Activated T-helper 1 cell treated with anti-CD3 and anti-CD28 coated beads, Interleukin-12 subunit alpha, Interleukin-12 subunit beta, Interleukin-2, Interleukin-4 antibody, amounts not matched to agents 30 ng/mL and 10 ng/mL and 1 ng/mL, durations not matched to agents 14 hours and 24 hours and 36 hours (primary cell): ENCODE measurements at regions of chr4 and their contacts with region 1.

Region 1: DNA sequence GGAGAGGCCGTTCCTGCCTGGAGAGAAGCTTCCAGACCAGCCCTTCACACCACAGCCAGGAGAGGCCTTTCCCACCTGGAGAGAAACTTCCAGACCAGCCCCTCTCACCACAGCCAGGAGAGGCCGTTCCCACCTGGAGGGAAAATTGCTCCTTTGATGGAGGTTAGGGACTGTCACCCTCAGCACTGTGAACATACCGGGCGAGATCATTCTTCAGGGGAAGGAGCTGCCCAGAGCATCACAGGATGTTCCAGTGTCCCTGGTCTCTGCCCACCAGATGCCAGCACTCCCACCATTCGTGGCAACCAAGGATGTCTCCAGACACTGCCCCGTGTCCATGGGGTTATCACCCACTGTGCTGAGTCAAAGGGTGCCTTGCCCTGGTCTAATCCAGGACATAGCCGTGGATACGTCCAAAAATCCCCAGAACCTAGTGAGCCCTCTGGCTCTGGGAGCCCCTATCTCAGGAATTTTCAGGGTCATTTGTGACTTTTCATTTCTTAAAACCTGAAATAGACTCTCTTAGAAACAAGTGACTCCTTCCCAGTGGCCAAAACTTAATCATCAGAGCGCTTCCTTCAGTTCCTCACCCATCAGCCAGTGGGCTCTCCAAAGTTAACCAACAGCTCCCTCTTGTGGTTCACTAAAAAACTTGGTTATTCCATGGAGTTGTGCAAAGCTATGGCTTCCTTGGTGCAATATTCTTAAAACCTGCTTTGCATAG is 80.2 kb downstream of the CRMP1 start:
- DNase-seq: peak; percentile 9
- H3K4me3 Mint-ChIP-seq: no peak overlapping the region
- H3K27ac Mint-ChIP-seq: no peak overlapping the region
- H3K4me1 Mint-ChIP-seq: no peaks in the 10 kb centered on the region
- H3K27me3 Mint-ChIP-seq: peaks cover 2% of the 10 kb centered on the region

Region 2: DNA sequence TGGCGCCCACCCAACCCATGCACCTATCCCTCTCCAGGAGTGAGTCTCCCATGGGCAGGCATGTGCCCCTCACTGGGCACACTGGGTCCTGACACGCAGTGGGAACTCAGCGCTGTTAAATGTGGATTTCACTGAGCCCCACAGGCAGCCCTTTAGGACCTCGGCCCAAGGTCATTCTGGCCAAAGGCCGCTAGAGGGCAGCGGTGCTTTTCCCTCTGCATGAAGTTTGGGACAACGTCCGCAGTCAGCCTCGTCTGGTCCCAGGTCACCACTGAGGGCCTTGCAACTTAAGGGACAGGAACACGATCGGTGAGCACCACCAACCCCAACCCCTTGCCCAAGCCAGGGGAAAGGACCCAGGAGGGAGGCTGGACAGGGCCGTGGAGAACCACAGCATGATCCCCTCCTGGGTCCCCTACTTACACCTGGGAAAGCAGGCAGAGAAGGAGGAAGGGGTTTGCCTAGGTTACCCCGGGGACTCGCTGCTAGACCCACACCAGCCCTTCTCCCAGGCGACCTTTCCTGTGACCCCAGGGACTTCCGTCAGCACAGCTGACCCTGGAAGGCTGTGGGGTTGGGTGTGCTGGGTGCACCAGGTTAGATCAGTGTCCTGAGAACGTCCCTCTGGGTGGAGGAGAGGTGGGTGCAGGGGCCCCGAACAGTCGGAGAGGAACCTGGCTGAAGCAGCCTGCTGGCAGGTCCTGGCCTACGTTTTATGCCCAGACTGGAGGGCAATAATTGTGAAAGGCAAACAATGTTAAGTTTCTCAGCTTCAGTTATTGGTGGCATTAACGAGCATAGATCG is 817.4 kb before region 1 on chr4:
- intact Hi-C with region 1: loop called (anchors 1 kb)
- DNase-seq: peak; percentile 9
- H3K4me3 Mint-ChIP-seq: no peak overlapping the region
- H3K27ac Mint-ChIP-seq: no peak overlapping the region
- H3K4me1 Mint-ChIP-seq: no peaks in the 10 kb centered on the region
- H3K27me3 Mint-ChIP-seq: peaks cover 6% of the 10 kb centered on the region

Region 3: DNA sequence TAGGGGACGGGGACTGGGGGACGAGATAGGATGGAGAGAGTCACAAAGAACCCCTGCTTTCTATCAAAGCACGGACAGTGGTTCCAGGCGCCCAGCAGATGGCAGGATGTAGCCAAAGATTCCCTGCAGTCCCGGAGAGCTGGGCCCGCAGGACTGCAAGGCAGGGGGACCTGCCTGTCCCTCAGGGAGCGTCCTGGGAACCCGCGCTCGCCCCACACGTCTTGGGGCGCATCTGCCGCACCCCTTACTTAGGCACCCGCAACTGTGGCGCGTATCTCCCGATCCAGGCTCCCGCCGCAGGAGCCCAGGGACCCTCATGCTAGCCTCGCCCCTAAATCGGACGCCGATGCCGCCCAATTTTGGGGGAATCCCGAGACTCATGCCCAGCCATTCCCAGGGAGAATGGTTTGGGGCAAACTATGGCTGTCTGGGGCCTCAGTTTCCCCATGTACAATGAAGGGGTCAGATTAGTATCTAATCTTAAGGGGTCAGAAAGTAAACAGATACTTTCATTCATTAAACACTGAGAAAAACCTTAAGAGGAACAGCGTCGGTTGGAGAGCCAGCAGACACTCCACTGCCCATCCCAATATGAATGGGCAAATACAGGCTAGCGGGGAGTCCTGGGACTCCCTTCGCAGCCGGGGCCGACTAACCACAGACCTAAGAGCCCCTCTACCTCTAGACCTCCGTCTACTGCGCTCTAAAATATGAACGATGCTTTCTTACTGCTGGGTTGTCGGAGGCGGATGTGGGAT is 762.0 kb before region 1 on chr4:
- intact Hi-C with region 1: loop called (anchors 2 kb)
- DNase-seq: no peak
- H3K4me3 Mint-ChIP-seq: peak overlapping the region; percentile 46
- H3K27ac Mint-ChIP-seq: no peak overlapping the region
- H3K4me1 Mint-ChIP-seq: peaks cover 9% of the 10 kb centered on the region
- H3K27me3 Mint-ChIP-seq: peaks cover 35% of the 10 kb centered on the region

Region 4: DNA sequence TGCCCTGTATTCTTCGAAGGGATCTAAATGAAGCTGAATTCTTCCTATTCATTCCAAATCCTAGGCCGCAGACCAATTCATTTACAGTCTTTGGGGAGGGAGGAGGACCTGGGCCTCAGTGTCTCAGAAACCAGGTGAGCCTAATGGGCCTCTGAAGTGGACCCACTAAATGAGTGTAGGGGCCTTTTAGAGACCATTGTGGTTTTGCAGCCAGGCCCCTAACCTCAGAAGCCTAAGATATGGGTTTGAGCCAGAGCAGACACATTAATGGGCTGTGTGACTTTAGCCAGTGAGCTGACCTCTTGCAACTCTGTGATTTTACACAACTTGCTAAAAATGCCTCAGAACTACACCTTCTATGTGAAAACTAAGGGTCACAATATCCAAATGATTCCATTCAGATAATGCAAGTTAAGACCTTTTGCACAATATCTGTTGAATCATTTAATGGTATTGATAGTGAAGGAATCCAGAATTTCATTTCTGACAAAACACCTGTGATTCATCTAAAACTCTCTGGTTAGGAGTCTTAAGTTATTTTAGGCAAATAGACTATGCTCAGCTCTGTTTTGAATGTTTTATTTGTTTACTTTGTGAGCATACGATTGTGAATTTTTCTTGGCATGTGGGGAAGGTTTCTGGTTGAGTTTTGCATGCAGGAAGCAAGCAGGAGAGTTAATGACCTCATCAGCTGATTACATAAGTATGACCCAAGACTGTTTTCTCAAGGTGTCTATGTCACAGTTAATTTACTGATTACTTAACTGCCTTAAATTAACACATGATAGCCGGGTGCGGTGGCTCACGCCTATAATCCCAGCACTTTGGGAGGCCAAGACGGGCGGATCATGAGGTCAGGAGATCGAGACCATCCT is 26.6 kb before region 1 on chr4:
- intact Hi-C with region 1: no loop called
- DNase-seq: no peak
- H3K4me3 Mint-ChIP-seq: no peak overlapping the region
- H3K27ac Mint-ChIP-seq: no peak overlapping the region
- H3K4me1 Mint-ChIP-seq: no peaks in the 10 kb centered on the region
- H3K27me3 Mint-ChIP-seq: peaks cover 3% of the 10 kb centered on the region

Region 5: DNA sequence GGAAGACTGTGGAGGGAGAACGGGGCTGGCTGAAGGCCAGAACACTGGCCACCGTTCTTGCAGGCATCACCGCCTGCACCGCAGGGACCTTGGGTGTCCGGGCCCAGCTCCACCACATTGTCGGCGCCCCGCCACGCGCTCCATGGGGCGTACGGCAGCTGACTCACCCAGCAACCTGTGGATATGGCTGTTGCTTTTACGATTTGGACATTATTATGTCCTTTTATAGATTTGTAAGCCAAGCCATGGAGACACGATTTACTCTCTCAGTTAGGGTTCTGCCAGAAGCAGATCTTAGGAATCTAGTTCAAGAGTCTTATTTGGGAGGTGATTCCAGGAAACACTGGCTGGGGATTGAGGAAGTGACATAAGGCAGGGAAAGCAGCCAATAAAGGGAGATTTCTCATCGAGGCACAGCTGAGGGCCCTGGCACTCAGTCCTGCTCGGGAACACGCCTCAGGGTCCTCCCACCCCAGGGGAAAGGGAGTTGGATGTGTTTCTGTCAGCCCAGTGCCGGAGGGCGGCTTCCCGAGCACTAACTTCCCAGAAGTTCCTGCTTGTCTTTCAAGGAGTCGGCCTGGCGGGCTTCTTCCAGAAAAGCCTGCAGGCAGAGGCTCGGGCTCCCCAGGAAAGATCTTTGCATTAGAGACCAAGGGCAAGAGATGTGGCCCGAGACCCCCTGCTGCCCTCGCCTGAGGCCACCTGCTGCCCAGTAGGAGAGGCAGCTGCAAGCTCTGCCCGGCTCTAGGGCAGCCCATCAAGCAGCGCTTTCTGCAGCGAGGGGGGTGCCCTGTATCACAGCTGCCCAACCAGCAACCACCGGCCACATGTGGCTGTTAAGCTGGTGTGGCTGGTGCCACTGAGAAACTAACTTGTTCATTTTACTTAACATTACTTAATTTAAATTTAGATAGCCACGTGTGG is 27.3 kb after region 1 on chr4:
- intact Hi-C with region 1: no loop called
- DNase-seq: no peak
- H3K4me3 Mint-ChIP-seq: no peak overlapping the region
- H3K27ac Mint-ChIP-seq: no peak overlapping the region
- H3K4me1 Mint-ChIP-seq: no peaks in the 10 kb centered on the region
- H3K27me3 Mint-ChIP-seq: no peaks in the 10 kb centered on the region